ENCODE measurements at regions of chr5 and their contacts with region 1.

Region 1: DNA sequence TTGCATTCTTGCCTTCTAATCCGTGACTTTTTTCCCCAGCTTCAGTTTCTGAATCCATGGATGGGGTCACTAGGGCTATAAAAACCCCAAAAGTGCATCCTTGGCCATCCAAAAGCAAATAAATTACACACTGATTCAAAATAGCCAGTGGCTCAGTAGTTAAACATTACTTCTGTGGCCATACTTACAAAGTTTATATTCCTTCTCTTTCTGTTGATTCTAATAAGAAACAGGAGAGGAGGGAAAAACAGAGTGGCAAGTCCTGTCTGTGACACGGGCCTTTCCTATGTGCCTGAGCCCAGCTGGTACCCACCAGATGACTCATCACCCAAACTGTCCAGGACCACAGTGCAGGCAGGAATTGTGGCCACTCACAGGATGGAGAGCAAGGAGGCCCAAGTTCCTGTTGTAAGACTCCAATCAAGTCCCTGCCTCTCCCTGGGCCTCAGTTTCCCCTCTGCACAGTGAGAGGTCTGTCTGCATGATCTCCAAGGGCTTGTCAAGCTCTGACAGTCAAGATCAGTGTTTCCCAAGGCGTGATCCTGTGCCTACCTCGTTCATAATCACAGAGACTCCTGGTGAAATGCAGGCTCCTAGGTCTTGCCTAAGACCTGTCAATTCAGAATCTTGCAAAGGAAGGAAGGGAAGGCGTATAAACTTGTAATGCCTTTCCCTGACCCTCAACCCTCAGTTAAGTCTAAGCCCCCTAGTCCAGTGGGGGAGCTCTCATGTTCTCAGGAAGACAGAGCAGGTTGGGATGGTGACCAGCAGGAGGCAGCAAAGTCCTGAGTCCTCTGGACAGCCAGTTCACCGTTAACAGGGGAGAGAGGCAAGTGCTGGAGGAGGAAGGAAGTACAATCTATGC is 29.5 kb downstream of the TNIP1 start:
- DNase-seq: peak; percentile 81
- H3K4me3 ChIP-seq: no peak overlapping the region
- H3K27ac ChIP-seq: no peak overlapping the region
- H3K4me1 ChIP-seq: no peaks in the 10 kb centered on the region
- H3K27me3 ChIP-seq: no peaks in the 10 kb centered on the region
- CTCF ChIP-seq: peak; percentile 86 to 91
- POLR2A ChIP-seq: no peak

Region 2: GRCh38 chr5:151002250-151002649 is 49.0 kb before region 1 on chr5:
- CTCF ChIA-PET with region 1: interaction called, 115 read pairs
- POLR2A ChIA-PET with region 1: interaction called, 5 read pairs
- dilution Hi-C with region 1: no loop called
- intact Hi-C with region 1: loop called (anchors 1 kb)
- DNase-seq: peak; percentile 55
- H3K4me3 ChIP-seq: no peak overlapping the region
- H3K27ac ChIP-seq: no peak overlapping the region
- H3K4me1 ChIP-seq: no peaks in the 10 kb centered on the region
- H3K27me3 ChIP-seq: peaks cover 0 to 4% of the 10 kb centered on the region in 2 experiments
- CTCF ChIP-seq: peak in 1 of 2 donors; percentile 36
- POLR2A ChIP-seq: no peak

Region 3: GRCh38 chr5:151037561-151038411 is 13.5 kb before region 1 on chr5:
- CTCF ChIA-PET with region 1: interaction called, 37 read pairs
- POLR2A ChIA-PET with region 1: no interaction called
- dilution Hi-C with region 1: no loop called
- intact Hi-C with region 1: no loop called
- DNase-seq: peak; percentile 86
- H3K4me3 ChIP-seq: no peak overlapping the region
- H3K27ac ChIP-seq: peak overlapping the region; percentile 36
- H3K4me1 ChIP-seq: peaks cover 21% of the 10 kb centered on the region
- H3K27me3 ChIP-seq: no peaks in the 10 kb centered on the region
- CTCF ChIP-seq: no peak
- POLR2A ChIP-seq: no peak

Region 4: GRCh38 chr5:151080623-151081430 is 29.5 kb after region 1 on chr5 and contains the start of gene TNIP1:
- CTCF ChIA-PET with region 1: interaction called, 26 read pairs
- POLR2A ChIA-PET with region 1: no interaction called
- dilution Hi-C with region 1: no loop called
- intact Hi-C with region 1: no loop called
- DNase-seq: peak; percentile 92
- H3K4me3 ChIP-seq: peak within 1 kb of the TSS; percentile 51 to 77 (median 62)
- H3K27ac ChIP-seq: peak within 1 kb of the TSS; percentile 94
- H3K4me1 ChIP-seq: peaks cover 37% of the 10 kb centered on the region
- H3K27me3 ChIP-seq: no peaks in the 10 kb centered on the region
- CTCF ChIP-seq: no peak
- POLR2A ChIP-seq: peak; percentile 57
- total RNA-seq, gene TNIP1: 87.0 and 96.8 TPM in 2 replicates

Region 5: GRCh38 chr5:151115274-151115905 is 64.1 kb after region 1 on chr5:
- CTCF ChIA-PET with region 1: interaction called, 679 read pairs
- POLR2A ChIA-PET with region 1: interaction called, 3 read pairs
- dilution Hi-C with region 1: no loop called
- intact Hi-C with region 1: loop called (anchors 1 kb)
- DNase-seq: peak; percentile 64
- H3K4me3 ChIP-seq: no peak overlapping the region
- H3K27ac ChIP-seq: no peak overlapping the region
- H3K4me1 ChIP-seq: no peaks in the 10 kb centered on the region
- H3K27me3 ChIP-seq: no peaks in the 10 kb centered on the region
- CTCF ChIP-seq: peak; percentile 93 to 94
- POLR2A ChIP-seq: no peak

Region 6: GRCh38 chr5:151157426-151158286 is 106.4 kb after region 1 on chr5 and contains the start of gene ANXA6:
- CTCF ChIA-PET with region 1: interaction called, 48 read pairs
- POLR2A ChIA-PET with region 1: no interaction called
- dilution Hi-C with region 1: no loop called
- intact Hi-C with region 1: loop called (anchors 2 kb)
- DNase-seq: peak; percentile 83
- H3K4me3 ChIP-seq: peak within 1 kb of the TSS; percentile 73 to 92 (median 81)
- H3K27ac ChIP-seq: peak within 1 kb of the TSS; percentile 37
- H3K4me1 ChIP-seq: peaks cover 25% of the 10 kb centered on the region
- H3K27me3 ChIP-seq: no peaks in the 10 kb centered on the region
- CTCF ChIP-seq: no peak
- POLR2A ChIP-seq: no peak
- total RNA-seq, gene ANXA6: 240 and 266 TPM in 2 replicates

Region 7: GRCh38 chr5:151181828-151182523 is 130.7 kb after region 1 on chr5:
- CTCF ChIA-PET with region 1: no interaction called
- POLR2A ChIA-PET with region 1: no interaction called
- dilution Hi-C with region 1: no loop called
- intact Hi-C with region 1: no loop called
- DNase-seq: no peak
- H3K4me3 ChIP-seq: no peak overlapping the region
- H3K27ac ChIP-seq: no peak overlapping the region
- H3K4me1 ChIP-seq: no peaks in the 10 kb centered on the region
- H3K27me3 ChIP-seq: no peaks in the 10 kb centered on the region
- CTCF ChIP-seq: no peak
- POLR2A ChIP-seq: no peak

Region 8: GRCh38 chr5:151534350-151534749 is 483.1 kb after region 1 on chr5:
- CTCF ChIA-PET with region 1: no interaction called
- POLR2A ChIA-PET with region 1: no interaction called
- dilution Hi-C with region 1: no loop called
- intact Hi-C with region 1: no loop called
- DNase-seq: no peak
- H3K4me3 ChIP-seq: no peak overlapping the region
- H3K27ac ChIP-seq: no peak overlapping the region
- H3K4me1 ChIP-seq: no peaks in the 10 kb centered on the region
- H3K27me3 ChIP-seq: peaks cover 2 to 3% of the 10 kb centered on the region in 2 experiments
- CTCF ChIP-seq: no peak
- POLR2A ChIP-seq: no peak

Measured in endothelial cell of umbilical vein (primary cell).